Activated B cell treated with CpG ODN at 0.5 μM for 24 hours (primary cell): ENCODE measurements at regions of chr15 and their contacts with region 1.

Region 1: GRCh38 chr15:90233376-90234095 is at the start of gene CIB1:
- DNase-seq: peak; percentile 92
- ATAC-seq: peak; percentile 86
- H3K4me3 Mint-ChIP-seq: peak within 1 kb of the TSS; percentile 87
- H3K27ac Mint-ChIP-seq: peak within 1 kb of the TSS; percentile 97
- H3K4me1 Mint-ChIP-seq: peaks cover 50% of the 10 kb centered on the region
- H3K27me3 Mint-ChIP-seq: no peaks in the 10 kb centered on the region
- CTCF ChIP-seq: no peak
- total RNA-seq, gene CIB1: 96.6 and 105 TPM in 2 replicates

Region 2: DNA sequence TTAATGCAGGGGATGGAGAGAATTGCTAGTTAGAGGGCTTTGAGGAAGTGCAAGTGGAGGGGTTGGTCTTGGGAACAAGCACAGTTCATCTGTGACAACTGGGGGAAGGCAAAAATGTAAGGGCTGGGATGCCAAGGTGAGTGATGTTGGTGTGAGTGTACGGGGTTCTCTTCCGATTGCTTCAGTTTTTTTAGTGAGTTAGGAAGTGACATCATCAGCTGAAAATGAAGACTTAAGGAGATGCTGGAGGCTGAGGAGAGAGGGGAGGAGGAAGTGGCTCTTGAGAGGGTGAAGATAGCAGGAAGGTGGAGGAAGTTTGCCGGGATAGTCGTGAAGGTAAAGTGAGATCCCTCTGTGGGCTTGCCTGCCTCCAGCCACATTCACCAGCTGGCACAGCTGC is 645.6 kb before region 1 on chr15:
- CTCF ChIA-PET with region 1: no interaction called
- POLR2A ChIA-PET with region 1: no interaction called
- intact Hi-C with region 1: no loop called
- DNase-seq: no peak
- ATAC-seq: no peak
- H3K4me3 Mint-ChIP-seq: no peak overlapping the region
- H3K27ac Mint-ChIP-seq: no peak overlapping the region
- H3K4me1 Mint-ChIP-seq: no peaks in the 10 kb centered on the region
- H3K27me3 Mint-ChIP-seq: no peaks in the 10 kb centered on the region
- CTCF ChIP-seq: no peak

Region 3: GRCh38 chr15:90001683-90002427 is 231.7 kb before region 1 on chr15:
- CTCF ChIA-PET with region 1: no interaction called
- POLR2A ChIA-PET with region 1: no interaction called
- intact Hi-C with region 1: loop called (anchors 5 kb)
- DNase-seq: peak; percentile 59
- ATAC-seq: peak; percentile 60
- H3K4me3 Mint-ChIP-seq: peak overlapping the region; percentile 91
- H3K27ac Mint-ChIP-seq: peak overlapping the region; percentile 91
- H3K4me1 Mint-ChIP-seq: peaks cover 41% of the 10 kb centered on the region
- H3K27me3 Mint-ChIP-seq: no peaks in the 10 kb centered on the region
- CTCF ChIP-seq: no peak

Region 4: DNA sequence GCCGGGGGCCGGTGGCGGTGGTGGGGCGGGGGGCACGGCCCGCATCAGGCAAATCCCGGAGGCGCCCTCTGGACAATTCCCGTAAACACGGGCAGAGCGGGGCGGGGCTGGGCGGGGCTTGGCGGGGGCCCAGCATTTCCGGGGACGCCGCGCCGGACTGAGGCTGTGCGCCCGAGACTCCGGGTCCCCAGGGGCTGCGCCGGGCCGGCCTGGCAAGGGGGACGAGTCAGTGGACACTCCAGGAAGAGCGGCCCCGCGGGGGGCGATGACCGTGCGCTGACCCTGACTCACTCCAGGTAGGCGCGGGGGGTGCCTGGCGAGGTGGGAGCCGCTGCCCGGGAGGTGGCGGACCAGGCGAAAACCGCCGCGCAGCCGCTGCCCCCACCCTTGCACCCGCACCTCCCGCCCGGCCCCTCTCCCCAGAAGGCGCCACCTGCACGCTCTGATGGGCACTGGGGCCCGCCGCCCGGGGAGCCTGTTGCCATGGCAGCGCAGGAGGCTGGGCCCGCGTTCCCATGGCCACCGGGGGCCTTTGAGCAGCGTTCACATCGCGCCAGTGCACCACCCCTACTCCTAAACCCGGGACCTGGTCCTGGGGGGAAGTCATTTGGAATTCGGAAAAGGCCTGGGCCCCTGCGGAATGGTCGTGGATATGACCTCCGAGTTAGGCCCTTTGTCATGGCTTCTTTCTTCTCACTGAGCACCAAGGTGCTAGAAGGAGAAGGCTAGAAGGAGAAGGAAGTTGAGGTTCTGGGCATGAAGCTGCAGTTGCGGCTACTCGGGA is 48.6 kb before region 1 on chr15:
- CTCF ChIA-PET with region 1: interaction called, 3 read pairs
- POLR2A ChIA-PET with region 1: interaction called, 63 read pairs
- intact Hi-C with region 1: loop called (anchors 1 kb)
- DNase-seq: peak; percentile 77
- ATAC-seq: peak; percentile 77
- H3K4me3 Mint-ChIP-seq: peak overlapping the region; percentile 90
- H3K27ac Mint-ChIP-seq: peak overlapping the region; percentile 88
- H3K4me1 Mint-ChIP-seq: peaks cover 75% of the 10 kb centered on the region
- H3K27me3 Mint-ChIP-seq: no peaks in the 10 kb centered on the region
- CTCF ChIP-seq: no peak

Region 5: DNA sequence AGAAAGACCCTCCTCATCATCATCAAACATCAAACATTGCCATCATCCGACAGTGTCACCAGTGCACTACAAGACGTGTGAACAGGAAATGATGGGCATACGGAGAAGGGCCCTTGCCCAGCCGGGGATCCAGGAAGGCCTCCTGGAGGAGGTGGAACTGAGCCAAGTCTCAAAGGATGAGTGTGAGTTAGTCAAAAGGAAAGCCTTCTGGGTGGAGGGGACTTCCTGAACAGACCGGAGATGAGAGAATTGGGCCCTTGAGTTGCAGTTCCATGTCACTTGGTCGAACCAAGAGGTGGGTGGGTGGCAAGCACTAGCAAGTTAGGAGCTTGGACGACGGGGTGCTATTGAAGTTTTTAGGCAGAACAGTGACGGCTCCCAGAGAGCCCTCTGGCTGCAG is 23.9 kb before region 1 on chr15:
- CTCF ChIA-PET with region 1: interaction called, 9 read pairs
- POLR2A ChIA-PET with region 1: interaction called, 44 read pairs
- intact Hi-C with region 1: loop called (anchors 1 kb)
- DNase-seq: no peak
- ATAC-seq: peak; percentile 28
- H3K4me3 Mint-ChIP-seq: peak overlapping the region; percentile 65
- H3K27ac Mint-ChIP-seq: peak overlapping the region; percentile 95
- H3K4me1 Mint-ChIP-seq: peaks cover 98% of the 10 kb centered on the region
- H3K27me3 Mint-ChIP-seq: no peaks in the 10 kb centered on the region
- CTCF ChIP-seq: no peak

Region 6: DNA sequence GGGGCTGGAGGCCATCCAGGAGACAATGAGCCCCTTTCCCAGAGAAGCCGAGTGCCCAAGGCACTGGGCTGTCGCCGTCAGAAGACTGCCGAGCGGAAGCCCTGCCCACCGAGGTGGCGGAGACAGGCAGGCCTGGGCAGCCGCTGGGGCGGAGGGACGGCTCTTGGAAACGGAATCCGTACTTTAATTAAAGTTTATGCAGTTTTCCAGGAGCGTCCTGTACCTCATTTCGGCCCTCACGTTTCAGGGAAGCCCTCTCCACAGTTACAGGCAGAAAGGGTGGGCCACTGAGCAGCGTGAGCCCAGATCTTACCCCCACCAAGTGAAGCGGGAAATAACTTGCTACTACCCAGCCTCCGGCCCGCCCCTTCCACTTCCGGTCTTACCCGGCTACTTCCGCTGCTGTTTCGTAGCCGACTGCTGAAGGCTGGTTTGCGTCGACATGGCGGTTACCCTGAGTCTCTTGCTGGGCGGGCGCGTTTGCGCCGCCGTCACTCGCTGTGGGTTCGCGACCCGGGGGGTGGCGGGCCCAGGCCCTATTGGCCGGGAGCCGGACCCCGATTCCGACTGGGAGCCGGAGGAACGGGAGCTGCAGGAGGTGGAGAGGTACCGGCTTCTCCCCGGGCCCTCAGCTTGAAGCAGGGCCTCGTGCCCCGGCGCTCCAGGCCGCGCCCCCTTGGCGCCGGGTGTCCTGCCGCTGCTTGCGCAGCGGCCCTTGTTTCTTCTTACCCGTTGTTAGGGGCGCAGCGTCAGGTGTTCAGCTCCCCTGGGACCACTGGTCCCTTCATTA is 31.9 kb after region 1 on chr15 and contains the start of gene NGRN:
- CTCF ChIA-PET with region 1: interaction called, 5 read pairs
- POLR2A ChIA-PET with region 1: interaction called, 43 read pairs
- intact Hi-C with region 1: loop called (anchors 1 kb)
- DNase-seq: peak; percentile 93
- ATAC-seq: peak; percentile 85
- H3K4me3 Mint-ChIP-seq: peak within 1 kb of the TSS; percentile 93
- H3K27ac Mint-ChIP-seq: peak within 1 kb of the TSS; percentile 91
- H3K4me1 Mint-ChIP-seq: peaks cover 51% of the 10 kb centered on the region
- H3K27me3 Mint-ChIP-seq: no peaks in the 10 kb centered on the region
- CTCF ChIP-seq: no peak
- total RNA-seq, gene NGRN: 32.8 and 34.1 TPM in 2 replicates

Region 7: DNA sequence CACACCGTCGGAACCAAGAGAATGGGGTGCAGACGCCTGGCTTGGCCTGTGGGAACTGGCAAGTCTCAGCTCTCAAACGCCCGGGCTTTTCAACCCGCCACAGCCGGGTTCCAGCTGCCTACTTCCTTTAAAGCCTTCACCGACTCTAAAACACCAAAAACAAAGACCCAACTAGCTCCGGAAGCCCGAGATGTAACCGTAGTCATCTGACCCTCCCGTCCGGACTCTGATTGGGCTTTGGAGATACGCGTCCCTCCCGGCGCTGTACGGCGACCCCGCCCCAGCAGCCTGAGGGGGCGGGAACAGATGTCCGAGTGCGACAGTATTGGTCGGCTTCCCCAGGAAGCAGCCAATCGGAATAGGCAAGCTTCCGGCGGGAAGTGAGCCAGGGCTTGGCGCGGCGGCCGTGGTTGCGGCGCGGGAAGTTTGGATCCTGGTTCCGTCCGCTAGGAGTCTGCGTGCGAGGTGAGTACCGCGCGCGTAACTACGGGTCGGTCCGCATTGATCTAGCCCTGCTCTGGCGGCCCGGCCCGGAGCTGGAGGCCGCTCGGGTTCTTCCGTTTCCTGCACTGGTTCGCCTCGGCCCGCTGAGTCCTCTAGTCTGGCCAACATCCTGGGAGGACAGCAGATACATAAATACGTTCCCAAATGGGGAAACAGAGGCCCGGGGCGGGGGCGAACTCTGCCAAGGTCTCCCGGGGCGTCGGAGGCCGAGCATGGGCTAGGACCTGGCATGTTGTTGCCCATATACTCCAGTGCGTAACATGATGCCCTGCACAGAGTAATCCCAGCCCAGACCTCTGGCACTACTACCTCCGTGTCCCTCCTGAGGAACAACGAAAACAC is 483.7 kb after region 1 on chr15 and contains the start of gene BLM:
- CTCF ChIA-PET with region 1: no interaction called
- POLR2A ChIA-PET with region 1: no interaction called
- intact Hi-C with region 1: loop called (anchors 5 kb)
- DNase-seq: peak; percentile 87
- ATAC-seq: peak; percentile 99
- H3K4me3 Mint-ChIP-seq: peak within 1 kb of the TSS; percentile 96
- H3K27ac Mint-ChIP-seq: peak within 1 kb of the TSS; percentile 94
- H3K4me1 Mint-ChIP-seq: peaks cover 30% of the 10 kb centered on the region
- H3K27me3 Mint-ChIP-seq: no peaks in the 10 kb centered on the region
- CTCF ChIP-seq: no peak
- total RNA-seq, gene BLM: 18.2 and 23.4 TPM in 2 replicates